RWPE1 (cell line): ENCODE measurements at regions of chr6 and their contacts with region 1.

Region 1: GRCh38 chr6:36196880-36197548 is 470 bp downstream of the BRPF3 start:
- DNase-seq: peak; percentile 100
- H3K27ac ChIP-seq: peak overlapping the region; percentile 87
- CTCF ChIP-seq: no peak

Region 2: GRCh38 chr6:34284563-34285447 is 1912.2 kb before region 1 on chr6:
- CTCF ChIA-PET with region 1: no interaction called
- POLR2A ChIA-PET with region 1: no interaction called
- DNase-seq: no peak
- H3K27ac ChIP-seq: no peak overlapping the region
- CTCF ChIP-seq: no peak

Region 3: DNA sequence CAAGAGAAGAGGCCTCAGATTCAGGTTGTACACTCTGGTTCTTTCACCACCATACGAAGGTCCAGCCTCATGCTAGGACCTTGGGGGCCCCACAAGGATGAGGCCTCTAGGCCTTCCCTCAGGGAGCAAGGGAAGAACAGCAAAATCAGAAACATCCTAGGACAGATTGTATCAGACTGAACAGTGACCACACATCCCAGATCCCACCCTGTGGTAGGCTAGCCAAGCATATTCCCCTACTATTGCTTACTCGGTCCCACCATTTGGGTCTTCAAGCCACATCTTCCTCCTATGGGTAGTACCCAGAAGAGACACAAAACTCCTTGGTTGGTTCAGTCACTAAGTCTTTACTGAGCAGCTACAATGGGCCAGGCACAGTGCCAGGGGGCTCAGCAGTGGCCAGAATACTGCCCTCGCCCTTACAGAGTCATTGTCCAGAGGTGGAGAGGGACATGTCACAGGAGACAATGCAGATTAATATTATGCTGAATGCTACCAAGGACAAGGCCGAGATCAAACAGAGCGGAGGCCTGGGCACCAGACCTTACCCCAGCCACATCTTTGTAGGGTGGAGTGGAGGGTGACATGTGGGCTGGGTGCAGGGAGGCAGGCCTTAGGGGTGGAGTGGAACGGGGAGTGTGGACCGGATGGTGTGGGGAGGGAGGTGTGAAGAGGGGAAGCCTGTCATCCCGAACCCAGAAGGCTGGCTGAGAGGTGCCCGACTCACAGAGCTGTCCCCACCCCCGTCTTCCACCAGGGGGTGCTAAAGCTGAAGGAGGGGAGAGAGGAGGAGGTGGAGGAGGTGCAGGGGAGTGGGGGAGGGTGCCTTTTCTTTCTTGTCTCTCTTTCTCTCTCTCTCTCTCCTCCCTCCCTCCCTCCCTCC is 73.5 kb before region 1 on chr6:
- CTCF ChIA-PET with region 1: interaction called, 17 read pairs
- POLR2A ChIA-PET with region 1: no interaction called
- DNase-seq: peak; percentile 64
- H3K27ac ChIP-seq: no peak overlapping the region
- CTCF ChIP-seq: peak; percentile 44

Region 4: DNA sequence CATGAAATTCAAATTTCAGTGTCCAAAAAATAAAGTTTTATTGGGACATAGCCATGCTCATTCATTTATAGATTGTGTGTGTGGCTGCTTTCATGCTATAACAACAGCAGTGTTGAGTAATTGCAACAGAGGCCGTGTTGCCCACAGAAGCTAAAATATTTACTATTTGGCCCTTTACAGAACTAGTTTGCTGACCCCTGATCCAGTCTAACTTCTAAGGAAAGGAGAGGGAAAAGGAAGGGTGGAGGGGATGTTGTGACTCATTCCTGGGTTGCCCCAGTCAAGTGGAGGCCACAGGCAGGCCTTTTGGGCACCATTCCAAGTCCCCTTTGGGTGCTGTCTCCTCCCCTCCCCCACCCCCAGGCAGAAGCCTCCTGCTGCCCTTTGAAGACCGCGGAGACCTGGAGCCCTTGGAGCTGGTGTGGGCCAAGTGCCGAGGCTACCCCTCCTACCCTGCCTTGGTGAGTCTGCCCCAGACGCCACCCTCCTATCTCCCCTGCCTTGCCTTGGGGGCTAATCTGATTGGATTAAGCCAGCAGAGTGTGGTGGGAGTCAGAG is 28.0 kb after region 1 on chr6:
- CTCF ChIA-PET with region 1: no interaction called
- POLR2A ChIA-PET with region 1: no interaction called
- DNase-seq: no peak
- H3K27ac ChIP-seq: no peak overlapping the region
- CTCF ChIP-seq: no peak

Region 5: GRCh38 chr6:36302227-36302976 is 105.4 kb after region 1 on chr6:
- CTCF ChIA-PET with region 1: no interaction called
- POLR2A ChIA-PET with region 1: interaction called, 13 read pairs
- DNase-seq: peak; percentile 78
- H3K27ac ChIP-seq: no peak overlapping the region
- CTCF ChIP-seq: peak; percentile 82

Region 6: GRCh38 chr6:36642913-36643817 is 446.2 kb after region 1 on chr6:
- CTCF ChIA-PET with region 1: no interaction called
- POLR2A ChIA-PET with region 1: no interaction called
- DNase-seq: peak; percentile 78
- H3K27ac ChIP-seq: peak overlapping the region; percentile 76
- CTCF ChIP-seq: no peak